PC-3 (cell line): ENCODE measurements at regions of chr3 and their contacts with region 1.

Region 1: GRCh38 chr3:27289769-27290413 is 79.3 kb downstream of the NEK10 start:
- DNase-seq: peak; percentile 60
- ATAC-seq: peak; percentile 71
- H3K4me3 ChIP-seq: no peak overlapping the region
- H3K27ac ChIP-seq: 0 out of 2 replicates have a peak overlapping the region, but pooled peaks have one; percentile 3
- H3K4me1 ChIP-seq: peaks cover 13% of the 10 kb centered on the region
- H3K27me3 ChIP-seq: no peaks in the 10 kb centered on the region
- CTCF ChIP-seq: no peak

Region 2: DNA sequence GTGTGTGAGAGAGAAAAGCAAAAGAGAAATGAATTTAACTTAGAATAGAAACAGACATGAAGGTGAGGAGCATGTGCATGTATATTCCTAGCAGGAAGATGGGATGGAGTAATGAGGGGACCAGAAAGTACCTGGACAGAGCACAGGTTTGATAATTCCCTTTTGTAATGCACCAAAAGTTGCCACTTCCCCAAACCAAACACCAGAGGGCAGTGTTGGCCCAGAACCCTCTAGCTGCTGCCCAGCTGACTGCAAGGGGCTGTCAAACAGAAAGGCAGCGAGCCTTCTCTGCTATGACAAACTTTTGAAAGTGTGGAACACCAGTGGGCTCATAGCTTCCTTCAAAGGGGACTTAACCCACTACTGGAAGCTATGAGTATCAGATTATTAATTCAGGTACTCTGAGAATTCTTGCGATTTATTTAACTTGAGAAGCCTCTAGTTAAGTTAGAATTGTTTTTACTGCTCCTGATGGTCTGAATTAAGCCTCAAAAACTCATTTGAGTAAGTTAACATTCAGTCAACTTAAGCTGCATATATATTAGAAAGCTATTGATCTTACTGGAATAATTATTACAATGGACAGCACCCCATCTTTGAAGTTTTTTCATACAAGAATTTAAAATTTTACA is 155.6 kb before region 1 on chr3:
- CTCF ChIA-PET with region 1: no interaction called
- POLR2A ChIA-PET with region 1: no interaction called
- intact Hi-C with region 1: no loop called
- DNase-seq: peak; percentile 82
- ATAC-seq: peak; percentile 93
- H3K4me3 ChIP-seq: no peak overlapping the region
- H3K27ac ChIP-seq: no peak overlapping the region
- H3K4me1 ChIP-seq: no peaks in the 10 kb centered on the region
- H3K27me3 ChIP-seq: peaks cover 18% of the 10 kb centered on the region
- CTCF ChIP-seq: peak; percentile 93

Region 3: DNA sequence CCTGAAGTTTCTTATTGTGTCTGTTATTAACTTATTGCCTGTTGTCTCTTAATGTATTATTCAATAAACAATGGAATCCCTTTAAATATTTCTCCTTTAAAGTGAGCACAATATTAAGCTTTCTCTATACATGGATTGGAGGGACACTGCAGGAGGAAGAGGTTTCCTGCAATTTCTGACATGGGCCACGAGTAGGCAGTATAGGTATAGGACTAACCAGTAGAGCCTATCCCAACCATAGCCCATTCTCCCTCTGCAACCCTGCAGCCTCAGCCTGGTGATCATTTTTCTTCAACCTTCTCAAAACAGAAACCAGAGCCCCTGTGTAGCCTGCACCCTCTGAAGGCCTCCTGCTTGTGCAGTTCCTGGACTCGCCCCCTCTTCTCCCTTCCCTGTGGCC is 45.5 kb before region 1 on chr3:
- CTCF ChIA-PET with region 1: no interaction called
- POLR2A ChIA-PET with region 1: no interaction called
- intact Hi-C with region 1: no loop called
- DNase-seq: no peak
- ATAC-seq: no peak; the same call in 1 of the 2 replicates
- H3K4me3 ChIP-seq: no peak overlapping the region
- H3K27ac ChIP-seq: no peak overlapping the region
- H3K4me1 ChIP-seq: no peaks in the 10 kb centered on the region
- H3K27me3 ChIP-seq: no peaks in the 10 kb centered on the region
- CTCF ChIP-seq: peak; percentile 36; the same call in 1 of the 2 replicates

Region 4: GRCh38 chr3:27345492-27345891 is 55.6 kb after region 1 on chr3:
- CTCF ChIA-PET with region 1: interaction called, 14 read pairs
- POLR2A ChIA-PET with region 1: no interaction called
- intact Hi-C with region 1: no loop called
- DNase-seq: peak; percentile 48
- ATAC-seq: peak; percentile 73
- H3K4me3 ChIP-seq: no peak overlapping the region
- H3K27ac ChIP-seq: no peak overlapping the region
- H3K4me1 ChIP-seq: peaks cover 19% of the 10 kb centered on the region
- H3K27me3 ChIP-seq: no peaks in the 10 kb centered on the region
- CTCF ChIP-seq: no peak

Region 5: DNA sequence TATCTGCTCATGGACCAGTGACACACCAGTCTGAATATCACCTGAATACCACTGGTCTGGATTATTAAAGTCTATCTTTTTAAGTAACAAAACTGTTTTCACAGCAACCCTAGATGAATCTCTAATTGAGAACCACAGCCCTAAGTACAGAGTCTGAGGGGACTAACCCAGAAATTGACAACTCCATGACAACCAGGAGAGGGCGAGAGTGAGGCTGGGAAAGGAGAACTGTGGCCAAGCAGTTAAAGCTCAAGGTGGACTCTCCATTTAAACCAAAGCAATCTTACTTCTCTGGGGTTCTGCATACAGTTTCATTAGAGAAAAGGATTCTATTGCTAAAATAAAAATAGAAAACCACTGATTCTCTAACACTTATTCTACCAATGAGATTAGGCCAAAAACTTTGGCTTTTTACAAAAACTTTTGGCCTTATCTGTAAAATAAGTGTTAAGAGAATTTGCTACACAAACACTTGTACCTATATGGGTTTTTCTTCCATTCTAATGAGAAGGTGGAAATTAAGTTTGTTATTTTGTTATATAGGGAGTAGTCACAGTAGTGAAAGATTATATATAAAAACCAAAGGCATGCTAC is 67.9 kb after region 1 on chr3:
- CTCF ChIA-PET with region 1: no interaction called
- POLR2A ChIA-PET with region 1: no interaction called
- intact Hi-C with region 1: no loop called
- DNase-seq: peak; percentile 83
- ATAC-seq: peak; percentile 90
- H3K4me3 ChIP-seq: no peak overlapping the region
- H3K27ac ChIP-seq: no peak overlapping the region
- H3K4me1 ChIP-seq: peaks cover 13% of the 10 kb centered on the region
- H3K27me3 ChIP-seq: no peaks in the 10 kb centered on the region
- CTCF ChIP-seq: peak; percentile 87